ENCODE measurements at regions of chr3 and their contacts with region 1.

Region 1: DNA sequence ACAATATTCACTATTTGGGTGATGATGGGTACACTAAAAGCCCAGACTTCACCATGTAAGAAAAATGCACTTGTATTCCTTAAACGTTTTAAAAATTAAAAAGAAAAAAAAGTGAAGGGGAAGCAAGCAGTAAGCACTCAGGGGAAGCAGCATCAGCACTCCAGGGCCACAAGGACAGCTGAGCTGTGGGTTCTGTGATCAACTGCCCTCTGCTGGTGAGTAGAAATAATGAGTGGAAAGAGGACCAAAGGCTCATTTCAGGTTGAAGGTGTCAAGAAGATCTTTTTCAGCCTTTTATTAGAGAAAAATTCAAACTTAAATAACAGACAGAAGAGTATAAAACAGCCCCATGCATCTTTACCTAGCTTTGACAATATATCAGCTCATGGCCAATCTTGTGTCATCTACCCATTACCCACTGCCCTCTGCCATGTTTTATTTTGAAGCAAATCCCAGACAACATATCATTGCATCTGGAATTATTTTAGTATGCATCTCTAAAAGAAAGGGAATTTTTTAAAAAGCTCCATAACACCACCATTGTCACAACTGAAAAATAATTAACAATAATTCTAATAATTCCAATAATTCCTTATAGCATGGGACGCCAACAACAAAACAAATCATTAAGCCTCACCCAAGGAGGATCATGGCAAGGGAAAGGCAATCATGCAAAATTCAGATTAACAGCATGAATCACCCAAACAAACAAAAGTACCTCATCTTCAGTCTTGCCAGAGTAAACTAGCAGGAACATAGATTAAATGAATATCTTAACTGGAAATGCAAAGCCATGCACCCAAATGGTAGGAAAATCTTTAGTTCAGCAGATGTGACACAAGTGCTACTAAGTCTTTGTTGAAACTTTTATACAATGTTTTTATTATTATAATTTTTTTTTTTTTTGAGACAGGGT is 42.5 kb downstream of the TAMM41 start:
- DNase-seq: peak in 7 of 9 donors; percentile 30 to 57 (median 44)
- ATAC-seq: peak; percentile 85
- H3K4me3 ChIP-seq: no peak overlapping the region
- H3K4me3 Mint-ChIP-seq: no peak overlapping the region
- H3K27ac ChIP-seq: no peak overlapping the region
- H3K27ac Mint-ChIP-seq: no peak overlapping the region
- H3K4me1 ChIP-seq: no peaks in the 10 kb centered on the region
- H3K4me1 Mint-ChIP-seq: peaks cover 0 to 21% (median 4%) of the 10 kb centered on the region in 7 donors
- H3K27me3 ChIP-seq: no peaks in the 10 kb centered on the region
- H3K27me3 Mint-ChIP-seq: no peaks in the 10 kb centered on the region

Region 2: GRCh38 chr3:11379233-11379823 is 424.9 kb before region 1 on chr3:
- CTCF ChIA-PET with region 1: interaction called, 20 read pairs
- POLR2A ChIA-PET with region 1: no interaction called
- intact Hi-C with region 1: loop called (anchors 1 kb)
- DNase-seq: peak in 7 of 9 donors; percentile 8 to 47 (median 41)
- ATAC-seq: peak; percentile 40
- H3K4me3 ChIP-seq: no peak overlapping the region
- H3K4me3 Mint-ChIP-seq: no peak overlapping the region
- H3K27ac ChIP-seq: no peak overlapping the region
- H3K27ac Mint-ChIP-seq: no peak overlapping the region
- H3K4me1 ChIP-seq: no peaks in the 10 kb centered on the region
- H3K4me1 Mint-ChIP-seq: no peaks in the 10 kb centered on the region
- H3K27me3 ChIP-seq: no peaks in the 10 kb centered on the region
- H3K27me3 Mint-ChIP-seq: no peaks in the 10 kb centered on the region

Region 3: GRCh38 chr3:11719406-11720230 is 84.6 kb before region 1 on chr3:
- CTCF ChIA-PET with region 1: no interaction called
- POLR2A ChIA-PET with region 1: no interaction called
- intact Hi-C with region 1: loop called (anchors 1 to 2 kb)
- DNase-seq: peak; percentile 58 to 77 (median 67)
- ATAC-seq: peak; percentile 86
- H3K4me3 ChIP-seq: peak overlapping the region; percentile 74
- H3K4me3 Mint-ChIP-seq: peak overlapping the region; percentile 59 to 95 (median 82)
- H3K27ac ChIP-seq: peak overlapping the region; percentile 75
- H3K27ac Mint-ChIP-seq: peak overlapping the region in 1 of 9 donors; percentile 62
- H3K4me1 ChIP-seq: peaks cover 6 to 8% of the 10 kb centered on the region in 2 donors
- H3K4me1 Mint-ChIP-seq: peaks cover 14 to 30% (median 20%) of the 10 kb centered on the region in 7 donors
- H3K27me3 ChIP-seq: no peaks in the 10 kb centered on the region
- H3K27me3 Mint-ChIP-seq: peaks cover 2 to 34% (median 10%) of the 10 kb centered on the region in 5 donors

Region 4: GRCh38 chr3:11770477-11771391 is 33.5 kb before region 1 on chr3:
- CTCF ChIA-PET with region 1: no interaction called
- POLR2A ChIA-PET with region 1: no interaction called
- intact Hi-C with region 1: loop called in 1 of 2 experiments (anchors 2 kb)
- DNase-seq: peak; percentile 31 to 91 (median 86)
- ATAC-seq: peak; percentile 100
- H3K4me3 ChIP-seq: peak overlapping the region; percentile 12
- H3K4me3 Mint-ChIP-seq: peak overlapping the region; percentile 22 to 79 (median 62)
- H3K27ac ChIP-seq: peak overlapping the region; percentile 56
- H3K27ac Mint-ChIP-seq: peak overlapping the region; percentile 58 to 90 (median 70)
- H3K4me1 ChIP-seq: peaks cover 15% of the 10 kb centered on the region in 2 donors
- H3K4me1 Mint-ChIP-seq: peaks cover 11 to 30% (median 24%) of the 10 kb centered on the region in 7 donors
- H3K27me3 ChIP-seq: no peaks in the 10 kb centered on the region
- H3K27me3 Mint-ChIP-seq: no peaks in the 10 kb centered on the region

Region 5: DNA sequence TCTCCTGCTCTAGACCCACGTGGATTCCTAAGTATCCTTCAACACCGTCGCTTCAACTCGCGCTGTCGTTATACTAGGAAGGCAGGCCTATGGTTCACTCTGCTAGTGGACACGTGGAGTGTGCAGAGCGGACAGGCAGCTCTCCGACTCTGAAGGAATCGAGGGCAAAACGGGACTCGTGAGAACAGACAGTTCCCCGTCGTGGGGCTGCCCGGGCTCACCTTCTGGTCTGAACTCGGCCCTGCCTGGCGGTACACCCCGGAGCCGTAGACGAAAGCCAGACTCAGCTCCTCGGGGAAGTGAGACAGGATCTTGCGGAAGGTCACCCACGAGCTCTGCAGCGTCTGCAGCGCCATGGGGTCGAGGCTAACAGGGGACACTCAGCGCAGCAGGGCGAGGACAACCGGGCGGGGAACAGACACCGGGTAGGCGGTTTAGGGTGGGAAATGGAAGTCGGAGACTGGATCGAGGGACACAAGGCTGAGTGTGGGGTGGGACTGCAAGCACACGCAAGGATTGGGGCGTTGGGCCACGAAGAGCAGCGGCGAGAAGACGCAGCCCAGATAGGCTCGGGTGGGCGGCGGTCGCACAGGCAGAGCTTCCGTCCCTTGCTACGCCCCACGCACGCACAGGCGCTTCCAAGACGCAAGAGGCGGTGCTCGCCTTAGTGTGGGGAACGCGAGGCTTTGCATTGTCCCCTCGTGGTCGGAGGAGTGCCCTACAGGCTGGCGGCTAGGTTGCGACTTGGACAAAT is 42.2 kb after region 1 on chr3 and contains the start of gene TAMM41:
- CTCF ChIA-PET with region 1: no interaction called
- POLR2A ChIA-PET with region 1: no interaction called
- intact Hi-C with region 1: loop called in 1 of 2 experiments (anchors 1 kb)
- DNase-seq: peak; percentile 68 to 88 (median 85)
- ATAC-seq: peak; percentile 100
- H3K4me3 ChIP-seq: peak within 1 kb of the TSS; percentile 92
- H3K4me3 Mint-ChIP-seq: peak within 1 kb of the TSS; percentile 93 to 99 (median 98)
- H3K27ac ChIP-seq: peak within 1 kb of the TSS; percentile 90
- H3K27ac Mint-ChIP-seq: peak within 1 kb of the TSS; percentile 90 to 98 (median 96)
- H3K4me1 ChIP-seq: peaks cover 23 to 31% of the 10 kb centered on the region in 2 donors
- H3K4me1 Mint-ChIP-seq: peaks cover 21 to 62% (median 54%) of the 10 kb centered on the region in 7 donors
- H3K27me3 ChIP-seq: no peaks in the 10 kb centered on the region
- H3K27me3 Mint-ChIP-seq: peaks cover 0 to 12% (median 0%) of the 10 kb centered on the region in 5 donors
- total RNA-seq, gene TAMM41: 24.4 to 58.0 (median 28.6) TPM